GM13976 (cell line): ENCODE measurements at regions of chr17 and their contacts with region 1.

Region 1: DNA sequence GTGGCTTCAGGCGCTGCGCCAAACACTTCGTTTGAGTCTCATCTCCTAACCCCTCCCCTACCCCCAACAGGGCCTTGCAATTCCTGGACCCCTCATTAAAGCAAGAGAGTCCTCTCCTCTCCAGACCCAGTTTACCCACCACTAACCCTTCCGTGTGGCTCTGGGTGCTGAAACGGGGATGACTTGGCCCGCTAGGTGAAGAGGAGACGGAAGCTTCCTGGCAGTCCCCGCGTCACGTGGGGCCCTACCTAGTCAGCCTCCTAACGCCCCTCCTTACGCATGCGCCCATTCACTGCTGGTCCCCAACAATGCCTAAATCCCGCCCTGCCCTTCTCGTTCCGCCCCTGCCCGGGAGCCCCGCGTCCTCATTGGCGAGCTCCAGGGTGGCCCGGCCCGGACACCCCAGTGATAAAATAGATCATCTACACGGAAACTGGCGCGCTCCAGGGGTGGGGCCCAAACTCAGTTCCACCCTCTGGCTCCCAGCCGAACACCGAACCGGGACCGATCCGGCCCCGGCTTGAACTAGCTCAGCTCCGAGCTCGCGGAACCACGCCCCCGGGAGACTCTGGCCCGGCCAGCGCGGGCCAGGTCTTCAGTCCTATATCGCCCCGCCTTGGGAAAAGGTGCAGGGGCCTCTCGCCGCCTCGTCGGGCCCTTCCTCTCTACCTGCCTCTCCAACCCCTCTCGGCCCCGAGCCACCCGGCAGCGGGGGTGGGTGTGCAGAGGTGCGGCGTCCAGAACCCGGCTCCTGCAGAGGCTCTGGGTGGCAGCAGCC is at the start of gene SLC16A13:
- DNase-seq: peak; percentile 99
- CTCF ChIP-seq: no peak

Region 2: DNA sequence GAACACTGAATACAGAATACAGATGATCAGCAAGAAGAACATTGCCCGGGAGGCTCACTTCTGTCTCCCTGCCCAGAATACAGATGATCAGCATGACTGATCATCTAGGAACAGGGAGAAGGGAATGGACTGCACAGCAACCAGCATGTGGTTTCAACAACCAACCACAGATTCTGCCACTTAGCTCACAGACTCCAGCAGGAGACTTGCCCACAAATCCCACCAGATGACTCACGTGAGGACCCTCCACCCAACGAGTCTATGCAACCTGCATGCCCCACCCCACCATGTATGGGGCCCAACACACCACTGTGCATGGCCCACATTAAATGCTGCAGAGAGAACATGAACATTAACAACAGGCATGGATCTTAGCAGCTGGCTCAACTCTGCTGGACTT is 76.1 kb before region 1 on chr17:
- in situ Hi-C with region 1: no loop called
- DNase-seq: no peak
- CTCF ChIP-seq: no peak

Region 3: GRCh38 chr17:7173687-7174602 is 138.2 kb after region 1 on chr17:
- in situ Hi-C with region 1: no loop called
- DNase-seq: peak; percentile 69
- CTCF ChIP-seq: peak; percentile 19

Region 4: GRCh38 chr17:7280519-7281429 is 245.0 kb after region 1 on chr17:
- in situ Hi-C with region 1: loop called (anchors 25 kb)
- DNase-seq: peak; percentile 90
- CTCF ChIP-seq: peak; percentile 65